ENCODE measurements at regions of chr3 and their contacts with region 1.

Region 1: DNA sequence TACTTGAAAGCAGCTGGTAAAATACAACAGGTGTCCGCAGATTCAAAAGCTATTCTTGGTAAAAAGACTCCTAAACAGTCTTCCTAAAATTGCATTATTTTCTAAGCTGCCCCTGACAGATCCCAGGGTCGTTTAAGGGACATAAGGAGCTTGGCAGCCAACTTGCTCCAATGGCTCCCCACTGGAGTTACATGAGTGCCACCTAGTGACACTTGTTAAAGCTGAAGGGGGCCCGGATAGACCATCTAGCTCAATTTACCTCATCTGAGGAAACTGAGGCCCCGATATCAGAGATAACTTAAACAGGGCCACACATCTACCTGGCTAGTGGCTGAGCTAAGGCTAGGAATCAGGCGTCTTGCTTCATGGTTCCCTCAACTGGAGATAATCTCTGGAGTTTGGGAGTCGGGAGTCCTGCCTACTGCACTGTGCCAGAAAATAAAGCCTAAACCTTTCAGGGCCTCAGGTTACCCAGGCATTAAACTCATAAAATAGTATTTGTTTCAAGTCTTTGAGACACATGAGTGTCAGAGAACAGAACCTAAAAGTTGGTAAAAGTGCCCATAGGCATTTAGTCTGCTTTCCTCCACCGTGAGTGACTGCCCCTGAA is 6.5 kb upstream of the TBC1D23 start:
- DNase-seq: peak; percentile 68
- ATAC-seq: peak; percentile 97
- H3K4me3 ChIP-seq: no peak overlapping the region
- H3K27ac ChIP-seq: no peak overlapping the region
- H3K4me1 ChIP-seq: peaks cover 49% of the 10 kb centered on the region
- H3K27me3 ChIP-seq: no peaks in the 10 kb centered on the region
- CTCF ChIP-seq: peak; percentile 89
- EP300 ChIP-seq: no peak; a peak in 1 of 4 replicates
- POLR2A ChIP-seq: no peak
- RAD21 ChIP-seq: peak; percentile 94

Region 2: GRCh38 chr3:99833617-99834205 is 420.6 kb before region 1 on chr3:
- CTCF ChIA-PET with region 1: interaction called, 8 read pairs
- POLR2A ChIA-PET with region 1: interaction called, 13 read pairs
- in situ Hi-C with region 1: no loop called
- intact Hi-C with region 1: loop called (anchors 1 kb)
- DNase-seq: no peak
- ATAC-seq: no peak
- H3K4me3 ChIP-seq: no peak overlapping the region
- H3K27ac ChIP-seq: no peak overlapping the region
- H3K4me1 ChIP-seq: peaks cover 28% of the 10 kb centered on the region
- H3K27me3 ChIP-seq: no peaks in the 10 kb centered on the region
- CTCF ChIP-seq: no peak
- EP300 ChIP-seq: no peak
- POLR2A ChIP-seq: no peak
- RAD21 ChIP-seq: no peak

Region 3: GRCh38 chr3:99842826-99843589 is 411.3 kb before region 1 on chr3:
- CTCF ChIA-PET with region 1: interaction called, 17 read pairs
- POLR2A ChIA-PET with region 1: interaction called, 12 read pairs
- in situ Hi-C with region 1: loop called (anchors 5 kb)
- intact Hi-C with region 1: loop called (anchors 1 kb)
- DNase-seq: peak; percentile 38
- ATAC-seq: peak; percentile 80
- H3K4me3 ChIP-seq: no peak overlapping the region
- H3K27ac ChIP-seq: no peak overlapping the region
- H3K4me1 ChIP-seq: peaks cover 37% of the 10 kb centered on the region
- H3K27me3 ChIP-seq: no peaks in the 10 kb centered on the region
- CTCF ChIP-seq: peak; percentile 70
- EP300 ChIP-seq: no peak
- POLR2A ChIP-seq: no peak
- RAD21 ChIP-seq: peak; percentile 55; the same call in 1 of the 2 replicates

Region 4: DNA sequence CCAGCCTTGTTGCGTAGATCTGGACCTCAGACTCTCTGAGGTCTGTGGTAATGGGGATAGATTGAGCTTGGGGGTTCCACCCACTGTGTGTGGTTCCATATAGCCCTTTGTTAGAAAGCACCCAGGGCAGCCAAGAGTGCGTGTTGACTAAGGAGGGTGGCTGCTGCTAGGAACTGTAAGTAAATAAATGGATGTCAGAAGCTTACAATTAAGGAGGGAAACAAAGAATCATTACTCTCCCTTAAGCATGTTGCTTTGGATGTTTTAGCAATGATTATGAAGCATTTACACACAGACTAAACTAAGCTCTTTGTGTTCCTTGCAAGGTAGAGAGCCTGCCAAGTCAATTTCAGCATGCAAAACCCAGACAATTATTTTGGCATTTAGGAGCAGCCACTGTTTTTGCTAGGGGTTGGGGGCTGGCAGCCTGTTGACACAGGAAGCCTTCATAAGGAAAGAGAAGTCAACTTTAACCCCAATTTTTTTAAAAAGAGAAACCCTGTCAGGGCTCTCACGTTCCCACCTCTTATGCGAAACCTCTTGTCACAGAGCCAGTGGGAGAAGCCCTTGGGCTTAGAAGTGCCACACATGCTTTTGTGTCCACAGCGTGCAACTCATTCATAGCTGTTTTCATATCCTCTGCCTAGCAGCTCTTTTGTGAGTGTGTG is 308.8 kb before region 1 on chr3:
- CTCF ChIA-PET with region 1: no interaction called
- POLR2A ChIA-PET with region 1: no interaction called
- in situ Hi-C with region 1: no loop called
- intact Hi-C with region 1: loop called (anchors 10 kb)
- DNase-seq: no peak
- ATAC-seq: peak; percentile 43
- H3K4me3 ChIP-seq: no peak overlapping the region
- H3K27ac ChIP-seq: no peak overlapping the region
- H3K4me1 ChIP-seq: peaks cover 54% of the 10 kb centered on the region
- H3K27me3 ChIP-seq: no peaks in the 10 kb centered on the region
- CTCF ChIP-seq: no peak
- EP300 ChIP-seq: no peak
- POLR2A ChIP-seq: no peak
- RAD21 ChIP-seq: no peak

Region 5: DNA sequence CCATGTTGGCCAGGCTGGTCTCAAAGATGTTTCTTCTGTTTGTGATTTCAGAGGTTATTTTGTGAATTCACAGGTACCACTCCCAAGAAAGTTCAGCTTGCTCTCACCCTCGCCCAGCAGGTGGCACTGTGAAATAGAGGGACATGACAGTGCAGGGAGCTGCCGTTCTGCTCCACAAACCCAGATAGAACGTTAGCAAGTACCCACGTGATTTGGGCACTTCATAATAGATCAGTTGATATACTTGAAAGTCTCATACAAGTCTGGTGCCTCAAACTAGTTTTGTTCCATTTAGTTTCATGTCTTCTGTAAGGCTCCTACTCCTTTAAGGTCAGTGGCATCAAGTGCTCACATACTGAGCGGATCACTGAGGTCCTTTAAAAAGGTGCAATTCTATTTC is 185.4 kb before region 1 on chr3:
- CTCF ChIA-PET with region 1: interaction called, 17 read pairs
- POLR2A ChIA-PET with region 1: interaction called, 8 read pairs
- in situ Hi-C with region 1: loop called (anchors 5 kb)
- intact Hi-C with region 1: loop called (anchors 1 kb)
- DNase-seq: peak; percentile 79
- ATAC-seq: peak; percentile 95
- H3K4me3 ChIP-seq: no peak overlapping the region
- H3K27ac ChIP-seq: no peak overlapping the region
- H3K4me1 ChIP-seq: peaks cover 94% of the 10 kb centered on the region
- H3K27me3 ChIP-seq: no peaks in the 10 kb centered on the region
- CTCF ChIP-seq: peak; percentile 92
- EP300 ChIP-seq: no peak
- POLR2A ChIP-seq: no peak
- RAD21 ChIP-seq: peak; percentile 91

Region 6: DNA sequence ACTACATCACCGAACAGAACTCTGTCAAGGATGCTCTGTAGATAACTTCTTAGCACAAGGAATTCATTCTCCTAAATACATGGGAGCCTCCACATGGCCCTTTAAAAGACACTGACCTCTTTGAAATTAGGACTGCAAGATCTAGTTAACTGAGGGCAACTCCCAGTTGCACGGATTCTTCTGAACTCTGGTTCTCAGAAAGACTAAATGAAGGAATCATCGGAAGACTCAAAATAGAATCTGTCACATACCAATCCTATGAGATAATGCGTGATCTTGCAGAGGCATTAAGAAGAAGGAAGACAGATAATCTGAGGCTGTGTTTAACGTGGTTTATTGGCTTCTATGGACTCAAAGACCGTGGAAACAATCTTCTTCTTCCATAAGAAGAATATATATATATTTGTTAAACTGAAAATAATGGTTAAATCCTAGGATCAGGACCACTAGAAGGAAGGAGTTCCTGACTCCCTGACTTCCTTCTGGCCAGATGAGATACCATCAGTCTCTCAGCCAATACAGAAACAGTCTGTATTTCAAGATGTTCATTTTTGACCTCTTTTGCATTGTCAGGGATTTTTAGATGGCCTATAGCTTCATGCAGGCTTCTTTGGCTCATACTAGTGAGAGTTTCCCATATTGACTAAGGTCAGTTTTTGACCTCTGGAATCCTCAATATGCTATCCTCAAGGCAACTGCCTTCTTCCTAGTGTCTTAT is 27.4 kb before region 1 on chr3:
- CTCF ChIA-PET with region 1: no interaction called
- POLR2A ChIA-PET with region 1: no interaction called
- in situ Hi-C with region 1: no loop called
- intact Hi-C with region 1: no loop called
- DNase-seq: no peak
- ATAC-seq: no peak
- H3K4me3 ChIP-seq: no peak overlapping the region
- H3K27ac ChIP-seq: no peak overlapping the region
- H3K4me1 ChIP-seq: peaks cover 12% of the 10 kb centered on the region
- H3K27me3 ChIP-seq: no peaks in the 10 kb centered on the region
- CTCF ChIP-seq: no peak
- EP300 ChIP-seq: no peak
- POLR2A ChIP-seq: no peak
- RAD21 ChIP-seq: no peak

Measured in HepG2 (cell line).